ENCODE measurements at regions of chr18 and their contacts with region 1.

Region 1: GRCh38 chr18:59899298-59900221 is at the start of gene PMAIP1:
- DNase-seq: peak; percentile 89
- ATAC-seq: peak; percentile 82
- H3K4me3 Mint-ChIP-seq: peak within 1 kb of the TSS; percentile 95
- H3K27ac Mint-ChIP-seq: peak within 1 kb of the TSS; percentile 96
- H3K4me1 Mint-ChIP-seq: peaks cover 38% of the 10 kb centered on the region
- H3K27me3 Mint-ChIP-seq: no peaks in the 10 kb centered on the region
- total RNA-seq, gene PMAIP1: 26.4 to 30.5 TPM

Region 2: DNA sequence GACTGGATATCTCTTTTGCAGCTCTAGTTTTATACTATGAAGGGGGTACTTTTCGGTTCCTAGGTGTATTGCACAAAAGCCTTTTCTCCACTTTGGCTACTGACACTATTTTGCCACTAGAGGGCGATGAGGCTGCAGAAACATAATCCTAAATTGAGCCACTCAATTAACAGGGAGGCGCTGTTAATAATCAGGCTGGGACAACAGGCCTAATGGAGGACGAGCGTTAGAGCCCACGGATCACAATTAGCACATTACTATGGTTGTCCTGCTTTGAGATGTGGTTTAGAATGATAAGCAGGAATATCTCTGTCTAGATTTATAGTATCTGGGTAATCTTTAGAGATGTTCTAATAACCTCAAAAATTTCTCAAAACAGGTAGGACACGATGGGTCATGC is 62.0 kb before region 1 on chr18:
- CTCF ChIA-PET with region 1: interaction called, 13 read pairs
- POLR2A ChIA-PET with region 1: interaction called, 3 read pairs
- DNase-seq: peak; percentile 59
- ATAC-seq: peak; percentile 51
- H3K4me3 Mint-ChIP-seq: no peak overlapping the region
- H3K27ac Mint-ChIP-seq: no peak overlapping the region
- H3K4me1 Mint-ChIP-seq: no peaks in the 10 kb centered on the region
- H3K27me3 Mint-ChIP-seq: peaks cover 13% of the 10 kb centered on the region

Region 3: DNA sequence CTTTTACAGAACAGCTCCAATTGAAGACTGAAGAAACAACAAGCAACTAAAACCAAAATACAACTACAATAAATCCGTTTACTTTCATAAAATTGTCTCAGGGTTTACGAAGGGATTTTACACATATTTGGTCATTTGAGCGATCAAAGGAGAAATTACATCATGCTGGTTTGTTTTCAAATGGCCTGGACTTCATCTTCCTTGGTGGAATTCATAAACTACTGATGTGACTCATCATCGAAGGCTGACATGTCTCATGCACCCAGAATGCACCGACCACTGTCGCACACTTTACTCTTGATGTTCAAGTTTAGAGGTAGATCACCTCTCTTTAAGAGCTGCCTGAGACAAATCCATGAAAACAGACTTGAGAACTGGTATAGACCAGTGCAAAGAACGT is 25.4 kb before region 1 on chr18:
- CTCF ChIA-PET with region 1: no interaction called
- POLR2A ChIA-PET with region 1: no interaction called
- DNase-seq: no peak
- ATAC-seq: no peak
- H3K4me3 Mint-ChIP-seq: no peak overlapping the region
- H3K27ac Mint-ChIP-seq: no peak overlapping the region
- H3K4me1 Mint-ChIP-seq: peaks cover 10% of the 10 kb centered on the region
- H3K27me3 Mint-ChIP-seq: peaks cover 5% of the 10 kb centered on the region

Region 4: DNA sequence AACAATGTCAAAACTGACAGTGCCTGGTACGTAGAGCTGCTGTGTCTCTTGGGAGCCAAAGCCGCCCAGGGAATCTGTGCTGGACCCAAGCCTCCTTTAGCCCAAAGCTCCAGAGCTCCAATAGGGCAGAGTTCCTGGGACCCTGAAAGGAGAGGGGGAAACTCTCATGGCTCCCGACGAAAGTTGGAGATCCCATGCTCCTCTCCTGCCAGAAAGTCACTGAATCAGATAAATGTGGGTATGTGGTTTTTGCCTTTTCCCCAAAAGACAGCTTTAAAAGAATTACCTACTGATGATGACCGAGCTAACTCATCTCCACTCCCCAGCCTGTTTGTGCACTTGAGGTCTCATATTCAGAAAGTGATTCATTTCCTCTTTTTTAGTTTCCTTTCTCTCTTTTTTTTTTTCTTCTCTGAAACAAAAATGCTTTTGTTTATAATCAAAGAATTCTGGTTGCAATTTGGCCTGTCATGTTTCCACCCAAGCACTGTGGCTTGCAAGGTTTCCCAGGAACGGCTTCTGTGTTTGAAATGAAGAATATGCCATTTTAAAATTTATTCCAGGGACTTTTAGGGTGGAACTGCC is 13.9 kb before region 1 on chr18:
- CTCF ChIA-PET with region 1: interaction called, 17 read pairs
- POLR2A ChIA-PET with region 1: interaction called, 26 read pairs
- DNase-seq: peak; percentile 50
- ATAC-seq: peak; percentile 66
- H3K4me3 Mint-ChIP-seq: peak overlapping the region; percentile 47
- H3K27ac Mint-ChIP-seq: peak overlapping the region; percentile 76
- H3K4me1 Mint-ChIP-seq: peaks cover 40% of the 10 kb centered on the region
- H3K27me3 Mint-ChIP-seq: no peaks in the 10 kb centered on the region

Region 5: DNA sequence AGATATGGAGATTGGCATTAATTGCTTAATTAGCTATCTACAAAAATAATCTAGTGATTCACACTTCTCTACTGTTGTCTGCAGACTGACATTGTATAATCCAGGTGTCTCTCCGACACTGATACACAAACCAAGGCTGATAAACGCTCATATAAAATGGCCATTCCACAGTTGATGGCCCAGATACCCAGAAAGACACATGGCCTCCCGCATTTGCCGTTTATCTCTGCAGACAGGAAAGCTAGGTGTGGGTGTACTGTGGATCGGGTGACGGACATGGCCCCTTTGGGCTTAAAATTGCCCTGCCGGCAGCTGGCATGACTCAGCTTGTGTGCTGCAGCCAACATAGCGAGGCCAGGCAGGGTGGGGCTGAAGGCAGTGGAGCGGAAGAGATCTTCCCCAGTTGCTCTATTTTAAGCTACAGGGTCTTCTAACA is 18.8 kb after region 1 on chr18:
- CTCF ChIA-PET with region 1: interaction called, 5 read pairs
- POLR2A ChIA-PET with region 1: interaction called, 14 read pairs
- DNase-seq: peak; percentile 38
- ATAC-seq: peak; percentile 29
- H3K4me3 Mint-ChIP-seq: no peak overlapping the region
- H3K27ac Mint-ChIP-seq: no peak overlapping the region
- H3K4me1 Mint-ChIP-seq: peaks cover 32% of the 10 kb centered on the region
- H3K27me3 Mint-ChIP-seq: peaks cover 18% of the 10 kb centered on the region

Region 6: GRCh38 chr18:59927246-59927825 is 27.8 kb after region 1 on chr18:
- CTCF ChIA-PET with region 1: no interaction called
- POLR2A ChIA-PET with region 1: interaction called, 10 read pairs
- DNase-seq: no peak
- ATAC-seq: no peak
- H3K4me3 Mint-ChIP-seq: no peak overlapping the region
- H3K27ac Mint-ChIP-seq: no peak overlapping the region
- H3K4me1 Mint-ChIP-seq: peaks cover 17% of the 10 kb centered on the region
- H3K27me3 Mint-ChIP-seq: peaks cover 31% of the 10 kb centered on the region

Region 7: DNA sequence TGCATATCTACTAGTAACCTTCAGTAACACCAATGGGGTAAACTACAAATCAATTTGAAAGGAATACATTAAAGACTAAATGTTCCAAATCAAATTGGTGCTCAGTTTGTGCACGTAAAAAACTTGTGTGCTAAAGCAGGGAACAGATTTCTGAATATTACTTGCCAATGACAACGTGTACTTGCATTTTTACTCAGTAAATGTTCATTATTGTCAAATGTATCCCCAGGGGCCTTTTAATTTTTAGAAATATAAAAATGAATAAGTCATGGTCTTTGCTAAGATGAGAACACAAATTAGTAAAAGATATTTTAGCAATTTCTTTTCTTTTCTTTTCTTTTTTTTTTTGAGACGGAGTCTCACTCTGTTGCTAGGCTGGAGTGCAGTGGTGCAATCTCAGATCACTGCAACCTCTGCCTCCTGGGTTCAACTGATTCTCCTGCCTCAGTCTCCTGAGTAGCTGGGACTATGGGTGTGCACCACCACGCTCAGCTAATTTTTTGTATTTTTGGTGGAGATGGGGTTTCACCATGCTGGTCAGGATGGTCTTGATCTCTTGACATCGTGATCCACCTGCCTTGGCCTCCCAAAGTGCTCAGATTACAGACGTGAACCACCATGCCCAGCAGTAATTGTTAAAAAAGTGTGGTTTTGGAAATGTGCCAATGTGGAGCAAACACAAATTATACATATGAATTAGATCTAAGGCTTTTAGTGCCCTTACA is 52.9 kb after region 1 on chr18:
- CTCF ChIA-PET with region 1: no interaction called
- POLR2A ChIA-PET with region 1: interaction called, 10 read pairs
- DNase-seq: no peak
- ATAC-seq: no peak
- H3K4me3 Mint-ChIP-seq: no peak overlapping the region
- H3K27ac Mint-ChIP-seq: no peak overlapping the region
- H3K4me1 Mint-ChIP-seq: peaks cover 8% of the 10 kb centered on the region
- H3K27me3 Mint-ChIP-seq: peaks cover 21% of the 10 kb centered on the region

Region 8: DNA sequence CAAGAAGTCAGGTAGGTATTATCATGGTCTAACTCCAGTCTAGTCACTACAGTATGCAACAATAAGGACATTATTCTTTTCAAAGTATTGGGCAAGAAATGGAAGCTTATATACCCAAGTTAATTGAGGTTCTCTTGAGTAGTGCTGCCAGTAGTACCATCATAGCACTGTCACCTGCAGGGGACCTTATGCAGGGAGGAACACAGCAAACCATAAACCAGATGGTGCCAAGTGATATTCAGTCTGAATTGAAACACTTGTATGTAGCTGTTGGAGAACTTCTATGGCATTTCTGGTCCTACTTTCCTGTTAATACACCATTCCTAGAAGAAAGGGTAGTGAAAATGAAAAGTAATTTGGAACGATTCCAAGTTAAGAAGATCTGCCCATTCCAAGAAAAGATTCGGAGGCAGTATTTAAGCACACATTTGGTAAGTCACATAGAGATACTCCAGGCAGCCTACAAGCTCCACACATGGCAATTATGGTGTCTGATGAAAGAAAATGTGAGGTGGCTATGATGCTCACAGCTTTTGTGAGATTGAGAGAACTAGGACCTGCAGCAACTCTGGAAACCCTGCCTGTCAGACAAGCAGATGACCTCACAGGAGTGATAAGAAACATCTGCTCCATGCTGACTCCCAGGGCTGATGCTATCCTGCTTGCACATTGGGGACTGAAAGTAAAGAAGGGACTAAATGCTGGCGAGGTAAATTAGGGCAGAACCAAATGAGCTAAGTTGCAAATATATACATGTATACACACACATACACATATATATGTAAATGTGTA is 298.3 kb after region 1 on chr18:
- CTCF ChIA-PET with region 1: no interaction called
- POLR2A ChIA-PET with region 1: no interaction called
- DNase-seq: no peak
- ATAC-seq: no peak
- H3K4me3 Mint-ChIP-seq: no peak overlapping the region
- H3K27ac Mint-ChIP-seq: no peak overlapping the region
- H3K4me1 Mint-ChIP-seq: no peaks in the 10 kb centered on the region
- H3K27me3 Mint-ChIP-seq: peaks cover 2% of the 10 kb centered on the region